Common myeloid progenitor, CD34-positive (primary cell): ENCODE measurements at regions of chr6 and their contacts with region 1.

Region 1: GRCh38 chr6:30533460-30534294 is 22.6 kb downstream of the GNL1 start:
- DNase-seq: no peak
- H3K4me3 ChIP-seq: no peak overlapping the region
- H3K27ac ChIP-seq: no peak overlapping the region
- H3K4me1 ChIP-seq: peaks cover 0 to 21% (median 17%) of the 10 kb centered on the region in 4 experiments
- H3K27me3 ChIP-seq: no peaks in the 10 kb centered on the region

Region 2: DNA sequence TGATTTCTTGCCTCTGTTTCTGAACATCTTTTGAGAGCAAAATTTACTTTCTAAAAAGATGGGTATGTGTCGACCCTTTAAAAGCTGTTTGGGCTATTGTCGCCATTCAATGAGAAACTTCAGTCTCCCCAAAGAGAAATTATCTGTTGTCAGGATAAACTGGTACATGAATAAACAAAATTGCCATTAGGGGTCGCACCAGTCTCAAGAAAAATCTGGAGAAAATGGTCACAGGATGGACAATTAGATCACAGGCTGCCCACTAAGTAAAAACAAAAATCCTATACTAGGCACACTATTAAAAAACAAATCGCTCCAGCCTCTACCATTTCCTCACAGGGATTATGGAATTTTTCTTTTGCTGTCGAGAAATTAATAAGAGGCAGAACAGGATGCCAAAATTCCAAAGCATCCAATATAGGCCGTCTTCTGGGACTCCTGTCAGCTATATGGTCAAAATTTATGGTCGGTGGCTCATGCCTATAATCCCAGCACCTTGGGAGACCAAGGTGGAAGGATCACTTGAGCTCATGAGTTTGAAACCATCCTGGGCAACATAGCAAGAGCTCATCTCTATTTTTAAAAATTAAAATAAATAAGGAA is 49.9 kb before region 1 on chr6:
- CTCF ChIA-PET with region 1: interaction called, 259 read pairs
- POLR2A ChIA-PET with region 1: interaction called, 6 read pairs
- DNase-seq: peak; percentile 68 to 79 (median 71)
- H3K4me3 ChIP-seq: no peak overlapping the region
- H3K27ac ChIP-seq: no peak overlapping the region
- H3K4me1 ChIP-seq: peaks cover 7 to 28% (median 19%) of the 10 kb centered on the region in 4 experiments
- H3K27me3 ChIP-seq: peaks cover 4 to 42% (median 26%) of the 10 kb centered on the region in 5 experiments

Region 3: GRCh38 chr6:30489081-30490025 is 44.3 kb before region 1 on chr6 and contains the start of gene HLA-E:
- CTCF ChIA-PET with region 1: interaction called, 259 read pairs
- POLR2A ChIA-PET with region 1: interaction called, 15 read pairs
- DNase-seq: peak; percentile 99 to 100 (median 100)
- H3K4me3 ChIP-seq: peak within 1 kb of the TSS; percentile 95 to 100 (median 98)
- H3K27ac ChIP-seq: peak within 1 kb of the TSS; percentile 89 to 93
- H3K4me1 ChIP-seq: peaks cover 10 to 41% (median 29%) of the 10 kb centered on the region in 4 experiments
- H3K27me3 ChIP-seq: no peaks in the 10 kb centered on the region

Region 4: DNA sequence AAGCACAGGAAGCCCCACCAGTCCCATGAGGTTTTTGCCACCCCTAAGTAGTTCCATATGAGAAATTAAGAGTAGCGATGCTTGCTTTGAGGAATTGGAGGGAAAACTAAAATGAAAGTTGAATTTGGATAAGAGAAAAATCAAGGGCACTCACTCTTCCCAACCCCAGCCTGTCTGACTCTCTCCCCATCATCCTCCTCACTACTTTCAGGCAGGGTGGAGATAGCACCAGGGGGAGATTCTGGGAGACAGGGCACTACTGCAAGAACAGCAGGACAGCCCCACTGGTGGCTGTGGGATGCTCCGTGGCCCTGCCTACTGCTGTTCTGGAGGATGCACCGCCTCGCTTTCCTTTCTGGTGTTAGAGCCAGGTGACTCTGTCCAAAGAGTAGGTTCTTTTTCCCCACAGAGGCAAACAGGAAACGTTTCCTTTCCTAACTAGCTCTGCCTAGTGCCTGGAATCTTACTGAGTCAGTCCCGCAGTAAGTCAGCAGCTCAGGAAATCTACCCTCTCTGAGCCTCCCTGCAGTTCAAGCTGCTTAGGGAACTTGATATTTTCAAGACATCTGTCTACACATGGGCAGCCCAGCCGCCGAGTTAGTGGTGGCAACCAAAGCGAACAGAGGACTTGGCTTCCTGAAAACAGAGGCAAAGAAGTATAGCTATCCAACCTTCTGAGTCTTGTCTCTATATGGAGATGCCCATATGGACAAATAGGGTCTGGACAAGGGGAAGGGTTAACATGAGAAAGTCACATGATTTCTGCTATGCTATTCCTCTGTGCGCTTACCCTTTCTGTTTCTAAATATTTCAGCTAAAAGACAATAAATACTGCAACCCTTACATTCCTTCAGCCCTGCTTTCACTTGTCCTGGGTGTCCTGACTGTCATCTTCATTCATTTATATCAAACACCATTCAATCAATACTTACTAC is 33.0 kb before region 1 on chr6:
- CTCF ChIA-PET with region 1: interaction called, 151 read pairs
- POLR2A ChIA-PET with region 1: interaction called, 5 read pairs
- DNase-seq: peak in 1 of 3 donors; percentile 45
- H3K4me3 ChIP-seq: peak overlapping the region in 1 of 7 experiments; percentile 1
- H3K27ac ChIP-seq: no peak overlapping the region
- H3K4me1 ChIP-seq: peaks cover 6 to 33% (median 22%) of the 10 kb centered on the region in 4 experiments
- H3K27me3 ChIP-seq: no peaks in the 10 kb centered on the region

Region 5: DNA sequence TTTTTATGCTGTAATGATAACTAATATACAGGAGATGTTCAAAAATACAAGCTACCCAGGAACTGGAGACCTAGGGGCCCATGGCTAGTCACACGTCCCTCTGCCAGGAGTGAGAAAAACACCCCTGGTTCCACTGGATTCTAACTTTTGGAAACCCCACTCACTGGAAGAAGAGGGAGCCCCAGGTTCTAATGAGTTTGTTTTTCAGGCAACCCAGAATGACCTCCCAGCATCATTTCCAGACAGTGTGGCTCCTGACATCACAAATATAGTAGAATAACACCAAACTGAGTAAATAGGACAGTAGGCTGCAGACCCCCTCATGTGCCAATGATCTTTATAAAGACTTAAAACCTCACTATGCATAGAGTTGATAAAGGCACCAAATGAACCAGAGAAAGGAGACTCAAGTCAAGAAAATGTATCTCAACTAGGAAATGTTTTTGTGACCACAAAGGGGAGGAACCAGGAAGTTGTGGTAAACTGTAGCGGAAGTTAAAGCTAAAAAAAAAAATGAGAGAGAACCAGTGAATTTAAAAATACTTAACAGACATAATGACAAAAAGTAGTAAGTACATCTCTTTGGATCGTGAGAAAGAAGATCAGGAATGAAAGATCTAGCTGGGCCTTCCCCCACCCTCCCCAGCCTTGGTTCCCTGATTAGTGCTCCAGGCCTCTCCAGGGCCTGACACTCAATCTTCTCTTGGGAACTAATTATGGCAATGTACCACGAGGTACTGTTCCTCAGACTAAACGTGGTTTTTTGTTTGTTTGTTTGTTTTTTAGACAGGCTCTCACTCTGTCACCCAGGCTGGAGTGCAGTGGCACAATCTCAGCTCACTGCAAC is 24.6 kb before region 1 on chr6:
- CTCF ChIA-PET with region 1: interaction called, 37 read pairs
- POLR2A ChIA-PET with region 1: interaction called, 8 read pairs
- DNase-seq: peak; percentile 84 to 94 (median 91)
- H3K4me3 ChIP-seq: peak overlapping the region in 6 of 7 experiments; percentile 16 to 72 (median 42)
- H3K27ac ChIP-seq: peak overlapping the region; percentile 17 to 64
- H3K4me1 ChIP-seq: peaks cover 35 to 74% (median 48%) of the 10 kb centered on the region in 4 experiments
- H3K27me3 ChIP-seq: no peaks in the 10 kb centered on the region

Region 6: GRCh38 chr6:30515932-30516753 is 17.5 kb before region 1 on chr6:
- CTCF ChIA-PET with region 1: interaction called, 39 read pairs
- POLR2A ChIA-PET with region 1: interaction called, 7 read pairs
- DNase-seq: peak; percentile 100
- H3K4me3 ChIP-seq: peak overlapping the region; percentile 14 to 76 (median 53)
- H3K27ac ChIP-seq: peak overlapping the region; percentile 98 to 99
- H3K4me1 ChIP-seq: peaks cover 8 to 62% (median 44%) of the 10 kb centered on the region in 4 experiments
- H3K27me3 ChIP-seq: no peaks in the 10 kb centered on the region